ENCODE measurements at regions of chr3 and their contacts with region 1.

Region 1: DNA sequence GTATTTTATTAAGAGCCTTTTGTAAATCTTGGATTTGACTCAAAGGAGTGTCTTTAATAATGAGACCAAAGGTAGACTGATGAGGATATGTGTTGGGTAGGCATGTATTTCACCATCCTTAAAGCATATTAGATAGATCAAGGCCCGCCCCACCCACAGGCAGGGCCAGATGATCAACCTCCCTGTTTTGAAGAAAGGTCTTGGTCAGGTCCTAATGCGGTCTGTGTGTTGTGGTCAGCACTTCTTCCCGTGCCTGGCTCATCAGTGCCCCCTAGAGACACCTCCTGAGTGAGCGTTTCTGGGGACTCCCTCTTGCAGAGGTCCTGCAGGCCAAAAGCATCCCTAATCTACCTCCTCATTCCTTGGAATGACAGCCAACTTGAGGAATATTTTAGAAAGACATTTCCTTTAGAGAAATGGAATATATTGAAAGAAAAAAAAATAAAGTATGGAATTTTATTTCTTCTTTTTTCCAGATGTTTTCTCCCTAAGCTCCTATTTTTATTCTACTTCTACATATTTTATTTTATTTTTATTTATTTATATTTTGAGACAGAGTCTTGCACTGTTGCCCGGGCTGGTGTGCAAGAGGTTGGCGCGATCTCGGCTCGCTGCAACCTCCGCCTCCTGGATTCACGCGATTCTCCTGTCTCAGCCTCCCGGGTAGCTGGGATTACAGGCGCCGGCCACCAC is 6.0 kb downstream of the TM4SF4 start:
- DNase-seq: peak; percentile 91
- ATAC-seq: peak; percentile 97
- H3K4me3 ChIP-seq: no peak overlapping the region
- H3K27ac ChIP-seq: no peak overlapping the region
- H3K4me1 ChIP-seq: peaks cover 8% of the 10 kb centered on the region
- H3K27me3 ChIP-seq: no peaks in the 10 kb centered on the region
- CTCF ChIP-seq: peak; percentile 95
- POLR2A ChIP-seq: 0 out of 2 replicates have a peak, but pooled peaks have one; percentile 41
- RAD21 ChIP-seq: peak; percentile 99

Region 2: GRCh38 chr3:149120051-149120972 is 360.2 kb before region 1 on chr3:
- CTCF ChIA-PET with region 1: interaction called, 3 read pairs
- POLR2A ChIA-PET with region 1: no interaction called
- dilution Hi-C with region 1: no loop called
- in situ Hi-C with region 1: loop called (anchors 5 kb)
- intact Hi-C with region 1: loop called (anchors 2 kb)
- DNase-seq: peak; percentile 76
- ATAC-seq: peak; percentile 85
- H3K4me3 ChIP-seq: no peak overlapping the region
- H3K27ac ChIP-seq: no peak overlapping the region
- H3K4me1 ChIP-seq: no peaks in the 10 kb centered on the region
- H3K27me3 ChIP-seq: no peaks in the 10 kb centered on the region
- CTCF ChIP-seq: peak; percentile 79
- POLR2A ChIP-seq: no peak
- RAD21 ChIP-seq: peak; percentile 86

Region 3: GRCh38 chr3:149352556-149352955 is 127.9 kb before region 1 on chr3:
- CTCF ChIA-PET with region 1: no interaction called
- POLR2A ChIA-PET with region 1: no interaction called
- dilution Hi-C with region 1: no loop called
- in situ Hi-C with region 1: no loop called
- intact Hi-C with region 1: loop called (anchors 1 kb)
- DNase-seq: peak; percentile 58
- ATAC-seq: peak; percentile 82
- H3K4me3 ChIP-seq: no peak overlapping the region
- H3K27ac ChIP-seq: no peak overlapping the region
- H3K4me1 ChIP-seq: peaks cover 8% of the 10 kb centered on the region
- H3K27me3 ChIP-seq: no peaks in the 10 kb centered on the region
- CTCF ChIP-seq: peak; percentile 66
- POLR2A ChIP-seq: no peak
- RAD21 ChIP-seq: peak; percentile 77

Region 4: DNA sequence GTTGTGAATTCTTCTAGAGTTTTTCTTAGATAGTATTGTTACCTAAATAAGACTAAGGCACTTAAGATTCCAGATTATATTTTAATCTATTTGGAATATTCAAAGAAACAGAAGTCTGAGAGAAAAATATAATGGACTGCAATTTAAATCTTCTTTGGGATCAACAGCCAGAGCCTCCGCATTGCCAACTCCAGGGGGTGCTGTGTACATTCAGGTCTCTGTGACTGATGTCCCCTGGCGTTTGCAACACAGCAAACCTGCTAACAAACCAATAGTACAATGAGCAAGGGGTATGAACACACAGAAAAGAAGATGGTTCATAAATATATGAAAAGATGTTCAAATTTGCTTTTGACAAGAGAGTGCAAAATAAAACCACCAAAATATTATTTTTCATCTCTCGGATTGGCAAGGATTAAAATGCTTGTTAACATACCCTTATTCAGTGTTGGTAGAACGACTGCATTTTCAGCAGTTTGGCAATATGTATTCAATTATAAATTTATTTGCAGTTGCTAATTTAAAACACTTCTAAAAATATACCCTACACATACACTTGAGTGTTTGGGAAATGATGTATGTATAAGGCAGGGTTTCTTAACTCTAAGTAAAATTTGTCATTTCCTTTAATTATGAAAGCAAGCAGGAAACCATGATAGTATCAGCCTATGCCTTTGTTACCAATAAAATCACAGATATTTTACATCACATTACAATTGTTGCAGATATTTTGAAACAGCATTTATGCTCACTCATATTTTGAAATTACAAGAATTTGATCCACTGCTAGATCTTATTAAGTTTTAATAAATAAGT is 86.9 kb before region 1 on chr3:
- CTCF ChIA-PET with region 1: interaction called, 3 read pairs
- POLR2A ChIA-PET with region 1: no interaction called
- dilution Hi-C with region 1: no loop called
- in situ Hi-C with region 1: loop called (anchors 5 kb)
- intact Hi-C with region 1: loop called (anchors 1 kb)
- DNase-seq: peak; percentile 83
- ATAC-seq: peak; percentile 81
- H3K4me3 ChIP-seq: no peak overlapping the region
- H3K27ac ChIP-seq: no peak overlapping the region
- H3K4me1 ChIP-seq: peaks cover 16% of the 10 kb centered on the region
- H3K27me3 ChIP-seq: no peaks in the 10 kb centered on the region
- CTCF ChIP-seq: peak; percentile 97
- POLR2A ChIP-seq: no peak
- RAD21 ChIP-seq: peak; percentile 87